WTC11 (cell line): ENCODE measurements at regions of chr17 and their contacts with region 1.

Region 1: DNA sequence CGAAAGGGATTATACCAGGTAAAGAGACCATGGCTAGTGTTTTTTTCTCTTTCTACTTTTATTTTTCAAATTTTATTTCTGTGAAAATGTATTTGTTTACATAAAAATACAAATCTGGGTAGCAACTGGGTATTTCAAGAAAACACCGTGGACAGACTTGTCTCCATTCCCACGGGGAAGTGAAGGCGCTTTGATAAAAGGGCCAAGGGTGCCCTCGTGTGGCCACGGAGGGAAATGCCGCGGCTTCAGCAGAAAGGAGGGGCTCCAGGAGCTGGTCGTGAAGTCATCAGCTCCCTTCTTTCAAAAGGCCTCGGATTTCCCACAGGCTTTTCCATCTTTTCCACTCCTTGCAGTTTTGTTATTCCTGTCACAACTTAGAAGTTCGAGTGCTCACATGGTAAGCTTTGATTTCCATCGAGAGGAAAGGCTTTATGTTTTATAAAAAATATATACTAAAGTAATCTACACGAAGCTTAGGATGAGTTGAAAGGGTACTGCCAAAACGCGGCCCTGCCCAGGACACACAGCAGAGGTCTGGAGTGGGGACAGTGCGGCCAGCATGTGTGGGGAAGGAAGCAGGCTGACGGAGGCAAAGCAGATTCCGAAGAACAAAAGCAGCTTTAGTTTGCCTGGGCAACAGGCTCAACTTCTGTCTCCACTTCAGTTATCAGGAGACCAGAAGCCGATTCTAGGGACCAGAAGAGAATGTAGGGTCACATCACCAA is 15.3 kb upstream of the MNT start:
- DNase-seq: peak; percentile 94
- ATAC-seq: peak; percentile 61
- H3K4me3 Mint-ChIP-seq: no peak overlapping the region
- H3K27ac Mint-ChIP-seq: peak overlapping the region; percentile 71
- H3K4me1 Mint-ChIP-seq: peaks cover 5% of the 10 kb centered on the region
- H3K27me3 Mint-ChIP-seq: no peaks in the 10 kb centered on the region
- CTCF ChIP-seq: peak; percentile 92

Region 2: GRCh38 chr17:2297023-2297422 is 119.1 kb before region 1 on chr17:
- CTCF ChIA-PET with region 1: no interaction called
- POLR2A ChIA-PET with region 1: no interaction called
- DNase-seq: no peak
- ATAC-seq: no peak
- H3K4me3 Mint-ChIP-seq: no peak overlapping the region
- H3K27ac Mint-ChIP-seq: no peak overlapping the region
- H3K4me1 Mint-ChIP-seq: peaks cover 6% of the 10 kb centered on the region
- H3K27me3 Mint-ChIP-seq: peaks cover 4% of the 10 kb centered on the region; the same call in 1 of the 2 replicates
- CTCF ChIP-seq: no peak

Region 3: GRCh38 chr17:2336215-2336851 is 79.8 kb before region 1 on chr17 and contains the start of gene TSR1:
- CTCF ChIA-PET with region 1: interaction called, 17 read pairs
- POLR2A ChIA-PET with region 1: no interaction called
- DNase-seq: peak; percentile 90
- ATAC-seq: peak; percentile 81
- H3K4me3 Mint-ChIP-seq: no peak within 1 kb of the TSS; the same call in 1 of the 2 replicates
- H3K27ac Mint-ChIP-seq: peak within 1 kb of the TSS; percentile 99
- H3K4me1 Mint-ChIP-seq: peaks cover 4% of the 10 kb centered on the region
- H3K27me3 Mint-ChIP-seq: no peaks in the 10 kb centered on the region
- CTCF ChIP-seq: no peak
- total RNA-seq, gene TSR1: 59.1 to 74.3 TPM (median 59.7 TPM) in 3 replicates

Region 4: DNA sequence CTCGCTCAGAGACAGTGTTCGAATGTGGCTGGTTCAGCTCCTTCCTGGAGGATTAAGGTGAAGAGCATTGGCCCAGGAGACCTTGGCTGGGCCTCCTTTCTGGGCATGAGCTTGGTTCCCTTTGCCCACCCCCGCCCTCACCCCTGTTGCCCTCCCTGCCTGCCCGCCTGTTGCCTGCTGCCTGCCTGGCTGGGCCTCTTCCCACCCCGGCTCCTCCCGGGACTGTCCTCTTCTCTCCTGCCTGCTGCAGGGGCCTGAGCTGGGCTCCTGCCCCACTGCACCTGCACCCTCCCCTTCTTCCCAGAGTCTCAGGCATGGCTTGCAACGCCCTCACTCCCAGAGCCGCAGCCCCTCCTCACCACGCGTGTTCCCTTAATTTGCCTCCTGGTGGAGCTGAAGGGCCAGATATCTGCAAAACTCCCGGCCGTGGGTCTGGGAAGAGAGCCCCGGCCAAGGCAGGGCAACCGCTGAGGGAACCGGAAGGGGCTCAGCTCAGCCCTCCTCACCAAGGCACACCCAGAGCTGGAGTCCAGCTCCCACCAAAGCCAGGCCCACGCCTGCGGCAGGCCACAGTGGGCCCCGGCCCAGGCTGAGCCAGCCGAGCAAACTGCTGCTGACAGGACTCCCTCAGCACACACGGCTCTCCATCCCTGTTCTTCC is 46.5 kb before region 1 on chr17:
- CTCF ChIA-PET with region 1: interaction called, 41 read pairs
- POLR2A ChIA-PET with region 1: interaction called, 5 read pairs
- DNase-seq: peak; percentile 64
- ATAC-seq: peak; percentile 71
- H3K4me3 Mint-ChIP-seq: no peak overlapping the region
- H3K27ac Mint-ChIP-seq: peak overlapping the region; percentile 80
- H3K4me1 Mint-ChIP-seq: peaks cover 12% of the 10 kb centered on the region
- H3K27me3 Mint-ChIP-seq: no peaks in the 10 kb centered on the region
- CTCF ChIP-seq: no peak

Region 5: DNA sequence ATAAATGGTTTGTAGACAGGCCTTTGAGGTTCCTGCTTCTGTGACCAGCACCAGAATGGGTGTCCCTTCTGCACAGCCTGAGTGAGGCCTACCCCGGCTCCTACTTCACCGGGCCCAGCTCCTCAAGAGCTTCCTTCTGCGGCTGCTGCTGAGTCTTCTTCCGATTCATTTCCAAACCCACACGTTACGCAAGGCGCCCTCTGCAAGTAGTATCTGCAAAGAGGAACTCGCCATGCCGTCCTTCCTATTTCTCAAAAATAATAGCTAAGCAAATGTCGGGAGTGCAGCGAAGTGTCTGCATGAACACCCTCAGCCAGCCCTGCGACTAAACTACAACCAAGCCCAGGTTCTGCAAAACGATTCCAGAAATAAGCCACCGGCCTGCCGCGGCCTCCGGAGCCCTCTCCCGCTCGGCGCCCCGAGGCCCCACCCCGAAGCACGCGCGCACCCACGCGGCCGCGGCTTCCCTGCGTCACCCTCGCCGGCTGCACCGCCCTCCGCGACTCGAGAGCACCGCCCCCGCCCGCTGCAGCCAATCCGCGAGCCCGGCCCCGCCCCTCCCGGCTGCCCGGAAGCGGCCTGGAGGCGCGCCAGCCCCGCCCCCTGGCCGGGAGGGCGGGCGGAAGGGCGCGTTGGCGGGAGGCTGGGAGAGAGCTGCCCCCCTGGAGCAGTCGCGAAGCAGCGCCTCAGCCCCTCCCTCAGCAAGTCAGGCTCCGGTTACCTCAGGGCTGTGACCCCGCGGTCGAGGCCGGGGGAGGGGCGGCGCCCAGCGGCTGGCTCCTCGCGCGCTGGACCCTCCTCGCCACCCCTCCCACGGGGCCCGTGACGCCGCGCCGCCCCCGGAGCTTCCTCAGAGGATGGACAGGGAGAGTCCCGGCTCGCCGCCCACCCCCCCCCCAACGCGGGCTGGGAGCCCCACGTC is 23.7 kb before region 1 on chr17:
- CTCF ChIA-PET with region 1: interaction called, 32 read pairs
- POLR2A ChIA-PET with region 1: interaction called, 7 read pairs
- DNase-seq: peak; percentile 94
- ATAC-seq: peak; percentile 59
- H3K4me3 Mint-ChIP-seq: peak overlapping the region; percentile 80
- H3K27ac Mint-ChIP-seq: peak overlapping the region; percentile 78
- H3K4me1 Mint-ChIP-seq: peaks cover 42% of the 10 kb centered on the region
- H3K27me3 Mint-ChIP-seq: no peaks in the 10 kb centered on the region
- CTCF ChIP-seq: no peak

Region 6: DNA sequence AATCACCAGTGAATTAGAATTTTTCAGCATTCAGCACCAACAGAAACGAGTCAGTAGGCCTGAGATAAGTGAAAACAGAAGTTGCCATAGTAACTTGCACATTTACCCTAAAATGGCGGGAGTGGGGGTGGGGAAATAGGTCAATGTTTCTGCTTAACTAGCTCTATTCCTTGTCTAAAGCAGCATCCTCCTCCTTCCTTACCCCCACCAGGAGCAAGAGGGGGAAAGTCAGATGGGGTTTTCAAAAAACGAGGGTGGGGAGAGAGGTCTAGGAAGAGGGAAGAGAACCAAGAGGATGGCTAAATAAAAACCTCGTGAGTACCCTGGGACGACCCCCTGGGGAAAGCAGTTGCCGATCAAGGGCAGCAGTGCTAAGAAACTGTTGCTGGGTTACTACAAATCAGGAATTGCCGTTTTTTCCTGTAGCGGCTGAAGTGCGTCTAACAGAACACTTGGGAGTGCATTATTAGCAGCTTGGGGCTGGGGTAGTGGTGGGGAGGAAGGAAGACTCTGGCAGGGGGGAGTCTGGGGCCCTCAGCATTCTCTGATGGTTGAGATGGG is 19.1 kb after region 1 on chr17:
- CTCF ChIA-PET with region 1: interaction called, 29 read pairs
- POLR2A ChIA-PET with region 1: no interaction called
- DNase-seq: peak; percentile 61
- ATAC-seq: peak; percentile 71
- H3K4me3 Mint-ChIP-seq: peak overlapping the region; percentile 28
- H3K27ac Mint-ChIP-seq: peak overlapping the region; percentile 84
- H3K4me1 Mint-ChIP-seq: peaks cover 33% of the 10 kb centered on the region
- H3K27me3 Mint-ChIP-seq: no peaks in the 10 kb centered on the region
- CTCF ChIP-seq: no peak

Region 7: DNA sequence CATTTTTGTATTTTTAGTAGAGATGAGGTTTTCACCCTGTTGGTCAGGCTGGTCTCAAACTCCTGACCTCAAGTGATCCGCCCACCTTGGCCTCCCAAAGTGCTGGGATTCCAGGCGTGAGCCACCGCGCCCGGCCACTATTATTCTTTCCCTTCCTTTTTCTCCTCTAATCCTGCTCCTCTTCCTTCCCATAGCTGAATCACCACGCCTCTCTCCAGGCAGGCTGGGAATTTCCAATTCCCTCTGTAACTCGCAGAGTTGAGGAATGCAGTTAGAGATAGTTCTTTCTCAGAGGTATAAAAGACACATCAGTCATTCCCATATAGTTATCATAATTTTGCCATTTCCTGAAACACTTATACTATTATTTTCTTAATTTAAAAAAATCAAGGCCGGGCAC is 84.3 kb after region 1 on chr17:
- CTCF ChIA-PET with region 1: no interaction called
- POLR2A ChIA-PET with region 1: no interaction called
- DNase-seq: no peak
- ATAC-seq: no peak
- H3K4me3 Mint-ChIP-seq: no peak overlapping the region
- H3K27ac Mint-ChIP-seq: no peak overlapping the region
- H3K4me1 Mint-ChIP-seq: no peaks in the 10 kb centered on the region
- H3K27me3 Mint-ChIP-seq: no peaks in the 10 kb centered on the region
- CTCF ChIP-seq: no peak